Aorta (tissue), 5 donors: ENCODE measurements at regions of chr6 and their contacts with region 1.

Region 1: GRCh38 chr6:74671558-74672025 is 534.3 kb downstream of the COL12A1 start:
- DNase-seq: no peak
- ATAC-seq: peak; percentile 74
- H3K4me3 ChIP-seq: no peak overlapping the region
- H3K27ac ChIP-seq: peak overlapping the region; percentile 43 to 86
- H3K4me1 ChIP-seq: peaks cover 3% of the 10 kb centered on the region in 2 donors
- H3K27me3 ChIP-seq: no peaks in the 10 kb centered on the region

Region 2: DNA sequence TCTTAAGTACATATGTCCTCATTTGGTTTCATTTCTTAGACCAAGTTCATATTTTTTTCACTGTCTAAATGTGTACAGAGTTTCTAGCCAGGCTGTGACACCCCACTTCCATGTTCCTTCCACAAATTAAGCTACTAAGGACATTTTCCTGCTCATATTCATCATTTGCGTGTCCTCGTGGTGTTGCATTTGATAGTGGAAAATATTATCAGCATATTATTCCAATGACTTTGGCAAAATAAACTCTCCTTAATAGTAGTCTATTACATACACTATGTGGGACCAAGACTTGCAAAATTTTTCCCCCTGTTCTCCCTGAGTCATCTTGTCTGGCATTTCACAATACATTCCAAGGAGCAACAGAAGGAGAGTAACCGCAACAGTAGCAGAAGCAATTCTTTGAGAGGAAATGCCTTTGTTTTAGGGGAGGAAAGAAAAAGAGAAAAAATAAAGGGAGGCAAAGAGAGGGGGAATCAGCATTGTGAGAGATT is 65.0 kb before region 1 on chr6:
- intact Hi-C with region 1: loop called in 1 of 2 experiments (anchors 5 kb)
- DNase-seq: no peak
- ATAC-seq: peak; percentile 89
- H3K4me3 ChIP-seq: no peak overlapping the region
- H3K27ac ChIP-seq: no peak overlapping the region
- H3K4me1 ChIP-seq: peaks cover 2 to 6% of the 10 kb centered on the region in 2 donors
- H3K27me3 ChIP-seq: peaks cover 0 to 2% of the 10 kb centered on the region in 2 donors